Calu3 (cell line): ENCODE measurements at regions of chr6 and their contacts with region 1.

Region 1: GRCh38 chr6:118651282-118652050 is at the start of gene CEP85L:
- DNase-seq: peak; percentile 89
- H3K4me3 Mint-ChIP-seq: peak within 1 kb of the TSS; percentile 87
- H3K27ac Mint-ChIP-seq: peak within 1 kb of the TSS; percentile 10
- H3K4me1 Mint-ChIP-seq: no peaks in the 10 kb centered on the region
- H3K27me3 Mint-ChIP-seq: no peaks in the 10 kb centered on the region
- CTCF ChIP-seq: no peak
- total RNA-seq, gene CEP85L: 4.4 and 5.8 TPM in 2 replicates

Region 2: DNA sequence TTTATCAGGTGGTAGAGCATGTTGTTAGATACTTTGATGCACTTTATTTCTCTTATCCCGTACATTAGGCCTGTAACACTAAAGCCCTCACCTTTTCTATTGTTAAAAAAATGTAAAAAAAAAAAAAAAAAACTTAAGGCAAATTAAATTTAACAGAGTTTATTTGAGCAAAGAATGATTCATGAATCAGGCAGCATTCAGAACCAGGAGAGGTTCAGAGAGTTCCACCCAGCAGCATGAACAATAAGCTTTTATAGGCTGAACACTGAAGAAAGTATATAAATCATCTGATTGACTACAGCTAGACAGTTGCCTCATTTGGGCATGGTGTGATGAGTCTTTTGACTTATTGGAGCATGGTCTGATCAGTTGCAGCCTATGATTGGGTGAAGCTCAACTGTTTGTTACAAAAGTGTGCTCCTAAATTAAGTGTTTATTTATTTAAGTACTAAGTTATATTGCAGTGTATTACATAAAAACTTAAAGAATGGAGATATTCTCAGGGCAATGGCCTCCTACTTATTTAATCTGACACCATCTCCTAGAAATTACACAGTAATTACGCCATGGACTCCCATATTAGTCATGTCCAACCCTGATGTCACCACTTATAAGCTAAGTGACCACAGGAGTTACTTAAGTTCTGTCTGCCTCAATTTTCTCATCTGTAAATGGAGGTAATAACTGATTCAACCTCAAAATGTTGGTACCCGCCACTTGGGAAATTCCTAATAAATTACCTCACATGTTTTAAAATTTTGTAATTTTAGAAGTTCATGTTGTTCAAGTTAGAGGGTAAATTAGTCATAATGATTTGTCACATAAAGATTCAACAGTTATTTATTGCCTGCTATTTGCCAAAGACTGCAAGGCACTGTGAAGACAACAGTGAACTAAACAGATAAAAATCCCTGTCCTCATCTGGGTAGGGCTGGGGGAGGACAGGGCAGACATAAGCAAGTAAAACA is 1210.6 kb before region 1 on chr6:
- CTCF ChIA-PET with region 1: no interaction called
- intact Hi-C with region 1: loop called (anchors 5 kb)
- DNase-seq: no peak
- H3K4me3 Mint-ChIP-seq: no peak overlapping the region
- H3K27ac Mint-ChIP-seq: peak overlapping the region; percentile 91
- H3K4me1 Mint-ChIP-seq: peaks cover 19% of the 10 kb centered on the region
- H3K27me3 Mint-ChIP-seq: no peaks in the 10 kb centered on the region
- CTCF ChIP-seq: no peak

Region 3: GRCh38 chr6:118709859-118710350 is 58.4 kb after region 1 on chr6:
- CTCF ChIA-PET with region 1: interaction called, 4 read pairs
- intact Hi-C with region 1: loop called (anchors 5 kb)
- DNase-seq: peak; percentile 12
- H3K4me3 Mint-ChIP-seq: peak overlapping the region; percentile 78
- H3K27ac Mint-ChIP-seq: no peak overlapping the region
- H3K4me1 Mint-ChIP-seq: peaks cover 34% of the 10 kb centered on the region
- H3K27me3 Mint-ChIP-seq: no peaks in the 10 kb centered on the region
- CTCF ChIP-seq: no peak

Region 4: DNA sequence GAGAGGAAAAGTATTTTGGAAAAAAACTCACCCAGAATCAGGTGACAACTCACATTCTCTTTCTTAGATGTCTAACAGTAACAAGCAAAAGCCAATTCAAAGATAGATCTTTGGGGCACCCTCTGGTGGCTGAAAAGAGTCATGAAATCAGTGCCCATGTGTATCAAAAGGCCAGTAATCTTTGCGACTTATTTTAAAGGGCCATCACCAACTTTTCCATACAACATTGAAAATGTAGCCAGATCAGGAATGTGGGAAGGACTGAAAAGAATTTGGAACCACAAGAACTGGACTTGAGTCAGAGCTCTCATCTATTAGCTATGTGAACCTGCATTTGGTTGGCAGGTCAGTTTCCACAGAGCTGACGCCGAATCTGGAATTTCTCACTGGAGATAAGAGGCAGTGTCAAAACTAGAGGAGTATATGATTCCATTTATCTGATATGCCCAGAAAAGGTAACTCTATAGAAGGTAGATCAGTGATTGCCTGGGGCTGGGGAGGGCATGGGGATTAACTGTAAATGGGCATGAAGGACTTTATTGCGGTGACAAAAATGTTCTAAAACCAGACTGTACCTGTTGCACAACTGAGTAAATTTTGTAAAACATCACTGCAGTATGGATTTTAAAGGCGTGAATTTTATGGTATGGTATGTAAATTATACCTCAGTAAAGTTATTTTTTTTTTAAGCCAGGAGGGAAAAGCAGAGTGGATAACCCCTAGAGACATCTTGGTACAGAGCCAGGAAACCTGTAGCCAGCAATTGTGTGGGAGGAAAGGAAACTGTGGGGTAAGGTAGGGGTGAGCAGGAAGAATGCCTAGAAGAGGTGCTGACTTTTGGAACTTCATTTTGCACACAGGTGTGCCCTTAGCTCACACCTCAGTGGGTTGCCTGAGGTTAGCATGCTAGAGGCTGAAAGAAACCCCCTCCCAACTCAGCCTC is 125.4 kb after region 1 on chr6:
- CTCF ChIA-PET with region 1: interaction called, 3 read pairs
- intact Hi-C with region 1: loop called (anchors 2 kb)
- DNase-seq: peak; percentile 64
- H3K4me3 Mint-ChIP-seq: no peak overlapping the region
- H3K27ac Mint-ChIP-seq: no peak overlapping the region
- H3K4me1 Mint-ChIP-seq: peaks cover 13% of the 10 kb centered on the region
- H3K27me3 Mint-ChIP-seq: no peaks in the 10 kb centered on the region
- CTCF ChIP-seq: peak; percentile 26